ENCODE measurements at regions of chr10 and their contacts with region 1.

Region 1: GRCh38 chr10:11667756-11668155 is 56.3 kb upstream of the USP6NL start:
- DNase-seq: no peak
- H3K4me3 ChIP-seq: no peak overlapping the region
- H3K4me3 Mint-ChIP-seq: no peak overlapping the region
- H3K27ac ChIP-seq: no peak overlapping the region
- H3K27ac Mint-ChIP-seq: no peak overlapping the region
- H3K4me1 ChIP-seq: peaks cover under 1% of the 10 kb centered on the region
- H3K4me1 Mint-ChIP-seq: peaks cover under 1 to 5% (median under 1%) of the 10 kb centered on the region in 3 donors
- H3K27me3 ChIP-seq: no peaks in the 10 kb centered on the region
- H3K27me3 Mint-ChIP-seq: peaks cover 3 to 9% of the 10 kb centered on the region in 2 donors

Region 2: GRCh38 chr10:11647676-11648075 is 20.1 kb before region 1 on chr10:
- CTCF ChIA-PET with region 1: no interaction called
- POLR2A ChIA-PET with region 1: no interaction called
- DNase-seq: no peak
- H3K4me3 ChIP-seq: no peak overlapping the region
- H3K4me3 Mint-ChIP-seq: no peak overlapping the region
- H3K27ac ChIP-seq: no peak overlapping the region
- H3K27ac Mint-ChIP-seq: no peak overlapping the region
- H3K4me1 ChIP-seq: no peaks in the 10 kb centered on the region
- H3K4me1 Mint-ChIP-seq: no peaks in the 10 kb centered on the region
- H3K27me3 ChIP-seq: no peaks in the 10 kb centered on the region
- H3K27me3 Mint-ChIP-seq: peaks cover 2 to 16% of the 10 kb centered on the region in 2 donors

Region 3: DNA sequence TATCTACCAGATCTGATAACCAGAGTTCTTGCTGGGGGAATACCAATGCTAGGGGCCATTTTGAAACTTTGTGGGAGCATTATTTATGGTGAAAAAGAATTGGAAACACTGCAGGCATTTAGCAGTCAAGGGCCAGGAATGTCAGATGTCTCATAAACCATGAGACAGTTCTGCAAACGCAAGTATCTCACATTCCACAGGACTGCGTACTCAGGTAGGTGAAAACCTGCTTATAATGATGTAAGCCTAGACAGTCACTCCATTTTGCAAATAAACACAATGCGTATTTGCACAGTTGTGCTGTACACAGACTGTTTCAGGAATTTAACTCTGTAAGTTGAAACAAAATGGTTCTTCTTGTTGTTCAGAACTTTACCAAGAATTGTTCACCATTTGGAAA is 108.3 kb after region 1 on chr10:
- CTCF ChIA-PET with region 1: no interaction called
- POLR2A ChIA-PET with region 1: interaction called, 10 read pairs
- DNase-seq: no peak
- H3K4me3 ChIP-seq: no peak overlapping the region
- H3K4me3 Mint-ChIP-seq: no peak overlapping the region
- H3K27ac ChIP-seq: no peak overlapping the region
- H3K27ac Mint-ChIP-seq: no peak overlapping the region
- H3K4me1 ChIP-seq: no peaks in the 10 kb centered on the region
- H3K4me1 Mint-ChIP-seq: no peaks in the 10 kb centered on the region
- H3K27me3 ChIP-seq: no peaks in the 10 kb centered on the region
- H3K27me3 Mint-ChIP-seq: peaks cover 6 to 17% of the 10 kb centered on the region in 2 donors